Cardiac septum (tissue), 1 donor: ENCODE measurements at regions of chr20 and their contacts with region 1.

Region 1: GRCh38 chr20:57654363-57654997 is 34.3 kb upstream of the ZBP1 start:
- DNase-seq: peak; percentile 78

Region 2: GRCh38 chr20:57622579-57623377 is 31.7 kb before region 1 on chr20:
- intact Hi-C with region 1: no loop called
- DNase-seq: no peak

Region 3: DNA sequence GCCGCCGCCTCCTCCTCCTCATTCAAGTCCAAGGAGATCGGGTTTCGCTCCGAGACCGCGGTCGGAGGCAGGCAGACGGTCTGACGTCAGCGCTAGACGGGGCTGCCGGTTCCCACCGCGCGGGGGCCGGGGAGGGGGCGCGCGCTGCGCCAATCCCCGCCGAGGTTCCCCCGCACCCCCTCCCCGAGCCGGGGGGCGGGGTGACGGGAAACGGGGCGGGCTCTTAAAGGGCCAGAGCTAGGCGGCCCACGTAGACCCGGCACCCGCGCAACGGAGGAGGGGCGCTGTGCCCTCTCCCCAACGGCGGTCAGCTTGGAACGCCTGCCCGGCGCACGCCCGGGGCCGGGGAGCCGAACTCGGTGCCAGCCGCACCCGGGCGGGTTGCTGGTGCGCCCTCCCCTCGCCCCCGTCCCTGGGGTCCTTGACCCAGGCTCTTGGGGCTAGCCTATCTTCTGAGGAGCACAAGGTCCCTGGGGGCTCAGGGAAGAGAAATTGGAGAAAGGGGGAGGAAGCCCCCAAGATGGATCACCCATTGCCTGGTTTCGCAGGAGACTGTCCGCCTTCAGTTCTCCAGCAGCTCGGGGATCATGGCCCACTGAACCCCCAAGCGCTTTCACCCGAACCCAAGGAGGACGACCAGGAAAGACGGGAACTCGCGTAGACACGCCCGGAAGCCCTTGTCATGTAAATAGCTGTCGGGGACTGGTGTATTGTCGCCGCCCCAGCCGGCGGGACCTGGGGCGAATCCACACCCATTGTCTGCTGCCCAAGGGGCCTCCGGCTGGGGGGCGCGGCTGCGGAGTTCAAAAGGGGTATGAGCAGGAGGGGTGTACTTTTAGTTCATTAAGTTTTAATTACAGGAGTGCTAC is 55.7 kb after region 1 on chr20 and contains the start of gene PMEPA1:
- intact Hi-C with region 1: loop called (anchors 5 kb)
- DNase-seq: peak; percentile 95
- total RNA-seq, gene PMEPA1: 34.8 TPM

Region 4: GRCh38 chr20:58087193-58087858 is 432.8 kb after region 1 on chr20:
- intact Hi-C with region 1: loop called (anchors 1 kb)
- DNase-seq: no peak

Region 5: DNA sequence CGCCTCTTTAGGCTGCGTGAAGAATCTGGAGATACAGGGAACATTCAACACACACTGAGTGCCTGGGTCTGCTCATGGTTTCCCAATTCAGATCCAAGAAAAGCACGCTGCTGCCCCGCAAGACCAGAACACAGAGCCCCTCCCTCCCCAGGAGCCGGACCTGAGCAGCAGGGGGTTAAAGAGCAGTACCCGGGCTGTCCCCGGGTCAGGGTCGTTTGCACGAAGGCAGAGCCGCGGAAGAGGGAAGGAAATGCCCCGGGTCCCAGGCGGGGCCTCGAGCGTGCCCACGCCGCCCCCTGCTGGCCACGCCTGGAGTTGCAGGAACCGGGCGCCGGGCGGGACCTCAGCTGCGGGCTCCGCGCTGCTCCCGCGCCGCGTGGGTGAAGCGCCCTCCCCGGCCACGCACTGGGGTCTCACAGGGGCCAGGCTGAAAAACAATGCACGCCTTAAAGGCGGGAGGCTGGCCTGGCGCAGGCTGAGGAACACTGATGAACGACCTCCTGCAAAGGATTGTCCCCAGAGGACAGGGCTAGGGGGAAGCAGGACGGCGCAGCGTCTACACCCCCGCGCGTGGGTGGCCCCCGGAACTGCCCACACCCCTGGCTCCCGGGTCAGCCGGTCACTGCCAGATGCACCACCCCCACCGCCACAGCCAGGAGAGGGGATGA is 525.1 kb after region 1 on chr20:
- intact Hi-C with region 1: loop called (anchors 2 kb)
- DNase-seq: peak; percentile 78